ENCODE measurements at regions of chr17 and their contacts with region 1.

Region 1: DNA sequence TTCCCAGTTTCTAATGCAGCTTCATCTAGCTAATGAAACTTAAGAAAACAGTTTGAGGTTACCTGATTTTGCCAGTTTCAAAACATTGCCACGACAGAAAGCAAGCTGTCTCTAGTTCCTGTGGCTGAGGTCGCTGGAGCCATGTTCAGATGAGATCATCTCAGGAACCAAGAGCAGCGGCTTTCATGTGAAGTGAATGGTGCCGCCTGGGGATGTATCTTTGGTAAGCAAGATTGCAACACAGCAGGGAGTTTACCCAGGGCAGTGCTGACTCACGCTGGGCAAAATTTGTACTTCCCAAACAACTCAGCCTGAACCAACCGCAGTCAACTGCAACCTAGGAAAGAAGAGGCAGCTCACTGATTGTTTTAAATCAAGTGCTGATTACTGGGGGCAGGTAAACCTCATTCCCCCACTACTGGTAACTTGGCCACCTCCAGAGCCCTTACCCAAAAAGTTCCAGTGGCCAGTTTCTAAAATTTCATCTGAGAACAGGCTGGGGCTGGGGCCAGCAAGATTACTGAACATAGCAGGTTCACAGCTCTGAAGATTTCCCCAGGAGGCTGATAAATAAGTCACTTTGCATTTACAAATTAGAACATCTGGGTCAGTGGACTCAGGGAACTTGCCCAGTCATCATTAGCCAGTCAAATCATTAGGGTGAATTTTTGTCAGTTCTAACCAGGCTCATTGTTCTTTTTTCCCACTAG is at the start of gene RFFL:
- DNase-seq: peak; percentile 84
- H3K4me3 Mint-ChIP-seq: peak within 1 kb of the TSS; percentile 5
- H3K27ac Mint-ChIP-seq: peak within 1 kb of the TSS; percentile 75
- H3K4me1 Mint-ChIP-seq: peaks cover 49% of the 10 kb centered on the region
- H3K27me3 Mint-ChIP-seq: no peaks in the 10 kb centered on the region
- total RNA-seq, gene RFFL: 21.3 and 25.4 TPM in 2 replicates

Region 2: DNA sequence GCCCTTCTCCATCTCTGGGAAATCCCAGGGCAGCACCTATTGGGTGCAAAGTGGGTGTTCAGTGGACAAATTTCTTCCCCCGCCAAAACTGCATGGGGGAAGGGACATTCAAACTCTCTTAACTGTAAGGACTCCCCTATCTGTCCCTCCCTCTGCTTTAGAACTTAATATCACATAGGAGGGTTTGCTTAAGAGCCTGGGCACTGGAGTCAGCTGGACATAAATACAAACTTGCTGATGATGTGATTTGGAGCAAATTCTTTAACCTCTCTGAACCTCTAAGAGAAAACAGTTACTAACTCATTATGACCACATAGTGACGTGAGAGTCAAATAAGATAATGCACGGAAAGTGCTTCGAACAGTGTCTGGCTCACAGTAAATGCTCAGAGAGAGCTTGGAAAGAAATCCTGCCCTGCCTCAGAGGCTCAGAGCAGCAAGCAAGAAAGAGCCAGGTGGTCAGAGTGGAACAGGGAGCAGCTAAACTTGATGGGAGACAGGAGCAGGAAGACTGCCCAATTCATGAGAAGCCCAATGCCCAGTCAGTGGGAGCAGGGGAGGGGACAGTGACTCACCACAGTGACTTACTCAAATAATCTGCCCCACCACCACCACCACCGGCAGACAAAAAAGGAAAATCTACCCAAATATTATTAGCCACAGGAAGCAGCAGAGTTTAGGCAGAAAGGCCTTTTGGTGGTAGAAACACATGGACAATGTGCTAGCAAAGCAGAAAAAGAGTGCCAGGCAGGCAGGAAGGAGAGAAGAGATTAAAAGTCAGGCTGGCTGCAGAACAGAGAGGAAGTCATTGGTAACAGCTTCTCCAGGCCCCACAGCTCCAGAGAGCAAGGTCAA is 676.7 kb before region 1 on chr17:
- intact Hi-C with region 1: loop called (anchors 5 kb)
- DNase-seq: no peak
- H3K4me3 Mint-ChIP-seq: peak overlapping the region; percentile 23
- H3K27ac Mint-ChIP-seq: peak overlapping the region; percentile 94
- H3K4me1 Mint-ChIP-seq: peaks cover 82% of the 10 kb centered on the region
- H3K27me3 Mint-ChIP-seq: no peaks in the 10 kb centered on the region

Region 3: DNA sequence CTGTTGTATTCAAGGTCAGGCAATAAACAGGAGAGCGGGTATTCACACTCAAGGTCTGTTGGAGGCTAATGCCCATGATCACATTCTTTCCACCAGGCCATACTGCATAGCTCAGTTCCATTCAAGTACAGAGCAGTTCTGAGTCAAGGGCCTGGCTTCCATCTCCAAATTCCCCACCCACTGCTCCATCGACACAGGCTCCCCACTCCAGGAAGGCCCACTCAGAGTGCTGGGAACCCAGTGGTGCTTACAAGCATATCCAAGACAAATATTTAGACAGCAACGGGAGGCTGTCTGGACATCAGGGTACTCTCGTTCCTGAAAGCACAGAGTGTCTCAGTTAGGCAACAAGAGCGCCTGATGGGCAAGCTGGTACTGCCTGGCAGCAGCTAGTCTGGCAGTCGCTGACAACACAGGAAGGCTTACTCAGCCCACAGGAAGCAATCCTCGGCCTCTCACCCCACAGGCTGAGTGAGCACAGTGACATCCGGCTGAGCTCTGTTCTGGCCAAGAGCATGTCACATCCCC is 41.1 kb before region 1 on chr17:
- intact Hi-C with region 1: loop called (anchors 1 kb)
- DNase-seq: peak; percentile 63
- H3K4me3 Mint-ChIP-seq: peak overlapping the region; percentile 70
- H3K27ac Mint-ChIP-seq: peak overlapping the region; percentile 99
- H3K4me1 Mint-ChIP-seq: peaks cover 30% of the 10 kb centered on the region
- H3K27me3 Mint-ChIP-seq: no peaks in the 10 kb centered on the region

Region 4: GRCh38 chr17:35073991-35074627 is 10.4 kb after region 1 on chr17:
- intact Hi-C with region 1: loop called (anchors 1 kb)
- DNase-seq: no peak
- H3K4me3 Mint-ChIP-seq: peak overlapping the region; percentile 35
- H3K27ac Mint-ChIP-seq: peak overlapping the region; percentile 78
- H3K4me1 Mint-ChIP-seq: peaks cover 53% of the 10 kb centered on the region
- H3K27me3 Mint-ChIP-seq: no peaks in the 10 kb centered on the region

Region 5: DNA sequence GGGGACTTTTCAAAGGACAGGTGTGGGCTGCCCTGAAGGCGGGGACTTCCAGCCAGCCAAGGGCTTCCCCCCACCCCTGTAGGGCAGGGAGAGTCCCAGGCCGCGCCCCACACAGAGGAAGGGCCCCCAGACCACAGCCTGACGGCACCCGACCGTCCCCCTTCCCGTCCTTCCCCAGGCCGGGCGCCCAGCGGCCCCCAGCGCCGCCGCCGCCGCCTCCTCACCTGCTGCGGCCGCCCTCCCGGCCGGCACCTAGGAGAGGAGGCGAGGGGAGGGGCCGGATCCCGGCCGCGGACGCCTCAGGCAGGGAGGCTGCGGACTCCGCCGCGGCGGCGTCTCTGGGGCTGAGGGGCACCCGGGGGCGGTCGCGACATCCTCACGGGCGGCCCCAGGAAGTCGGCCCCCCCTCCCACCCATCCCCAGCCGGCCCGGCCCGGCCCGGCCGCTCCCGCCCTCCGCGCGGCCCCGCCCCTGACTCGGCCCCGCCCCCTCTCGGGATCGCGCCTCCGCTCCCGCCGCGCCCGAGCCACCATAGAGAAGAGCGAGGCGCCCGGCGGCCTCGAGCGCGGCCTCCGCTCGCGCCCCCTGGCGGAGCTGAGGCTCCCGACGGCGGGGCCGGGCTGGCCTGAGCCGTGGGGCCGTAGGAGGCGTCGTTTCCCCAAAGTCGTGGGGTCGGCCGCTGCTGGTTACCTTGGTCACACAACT is 25.4 kb after region 1 on chr17:
- intact Hi-C with region 1: loop called (anchors 1 kb)
- DNase-seq: peak; percentile 84
- H3K4me3 Mint-ChIP-seq: peak overlapping the region; percentile 88
- H3K27ac Mint-ChIP-seq: peak overlapping the region; percentile 92
- H3K4me1 Mint-ChIP-seq: peaks cover 41% of the 10 kb centered on the region
- H3K27me3 Mint-ChIP-seq: no peaks in the 10 kb centered on the region

Measured in activated T-helper 2 cell treated with anti-CD3 and anti-CD28 coated beads, Interferon-gamma antibody, Interleukin-2, Interleukin-4, amounts not matched to agents 10 μg/mL and 5 μg/mL and 100 μg/mL, durations not matched to agents 14 hours and 24 hours and 36 hours (primary cell).